GM10248 (cell line): ENCODE measurements at regions of chr9 and their contacts with region 1.

Region 1: DNA sequence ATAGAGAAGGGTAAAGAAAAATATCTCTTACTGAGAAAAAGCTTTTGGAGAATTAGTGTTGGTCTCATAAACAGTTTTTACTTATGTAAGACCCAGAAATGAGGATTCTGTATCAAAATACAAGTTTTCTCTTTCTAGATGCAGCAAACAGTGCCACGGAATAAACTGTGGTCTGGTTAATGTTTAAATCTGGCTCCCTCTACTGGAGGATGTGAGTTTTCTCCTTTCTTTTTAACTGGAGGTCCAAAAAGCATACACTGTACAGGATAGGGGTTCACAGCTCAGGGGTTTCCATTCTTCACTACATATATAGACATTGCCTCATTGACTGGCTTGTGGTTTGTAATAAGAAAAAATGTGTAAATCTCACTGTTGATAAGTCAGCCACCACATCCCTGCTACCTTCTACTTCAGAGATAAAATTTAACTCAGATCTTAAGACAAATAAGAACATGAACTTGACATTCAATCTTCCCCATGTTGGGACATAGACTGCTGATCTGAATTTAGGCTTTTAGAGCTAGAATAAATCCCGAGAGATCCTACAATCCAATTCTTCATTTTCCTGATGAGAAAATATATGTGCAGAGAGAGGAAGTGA is 98.9 kb downstream of the CFAP95 start:
- DNase-seq: peak; percentile 59
- CTCF ChIP-seq: peak; percentile 69

Region 2: GRCh38 chr9:69672596-69673310 is 246.8 kb before region 1 on chr9:
- CTCF ChIA-PET with region 1: interaction called, 10 read pairs
- POLR2A ChIA-PET with region 1: no interaction called
- DNase-seq: peak; percentile 81
- CTCF ChIP-seq: peak; percentile 92

Region 3: DNA sequence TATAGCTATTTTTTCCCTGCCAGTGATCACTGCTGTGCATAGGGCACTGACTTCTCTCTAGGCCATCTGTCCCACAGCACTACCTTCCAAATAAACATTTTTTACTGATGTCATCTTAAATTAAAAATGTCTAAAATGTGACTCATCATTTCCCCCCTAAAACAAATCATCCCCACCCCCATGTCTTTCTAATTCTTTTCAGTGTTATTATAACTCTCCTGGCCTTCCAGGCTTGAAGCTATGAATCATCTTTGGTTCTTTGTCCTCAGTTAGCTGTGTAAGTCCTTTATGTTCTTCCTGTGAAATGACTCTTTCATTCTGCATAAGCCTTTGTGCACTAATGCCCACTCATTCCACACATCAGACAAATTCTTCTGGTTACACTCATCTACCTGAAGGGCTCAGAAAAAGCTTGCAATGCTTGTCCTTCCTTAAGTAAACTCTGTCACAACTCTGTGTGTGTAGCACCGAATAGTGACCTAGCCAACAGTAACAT is 20.8 kb before region 1 on chr9:
- CTCF ChIA-PET with region 1: interaction called, 10 read pairs
- POLR2A ChIA-PET with region 1: no interaction called
- DNase-seq: no peak
- CTCF ChIP-seq: no peak

Region 4: DNA sequence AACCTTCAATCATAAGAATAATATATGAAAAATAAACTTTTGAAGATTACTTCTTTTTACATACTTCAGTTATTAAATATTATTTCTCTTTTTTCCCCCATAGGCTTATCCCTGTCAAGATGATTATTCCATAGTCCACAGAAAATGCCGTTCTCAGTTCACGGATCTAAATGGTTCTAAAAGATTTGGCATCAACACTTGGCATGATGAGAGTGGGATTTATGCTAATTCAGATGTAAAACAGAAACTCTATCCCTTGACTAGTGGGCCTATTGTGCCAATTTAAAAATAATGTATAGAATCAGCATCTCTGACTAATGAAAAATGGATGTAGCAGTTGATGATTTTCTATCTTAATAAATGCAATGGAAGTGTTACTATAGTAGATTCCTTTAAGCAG is 13.7 kb before region 1 on chr9:
- CTCF ChIA-PET with region 1: interaction called, 14 read pairs
- POLR2A ChIA-PET with region 1: no interaction called
- DNase-seq: no peak
- CTCF ChIP-seq: no peak

Region 5: DNA sequence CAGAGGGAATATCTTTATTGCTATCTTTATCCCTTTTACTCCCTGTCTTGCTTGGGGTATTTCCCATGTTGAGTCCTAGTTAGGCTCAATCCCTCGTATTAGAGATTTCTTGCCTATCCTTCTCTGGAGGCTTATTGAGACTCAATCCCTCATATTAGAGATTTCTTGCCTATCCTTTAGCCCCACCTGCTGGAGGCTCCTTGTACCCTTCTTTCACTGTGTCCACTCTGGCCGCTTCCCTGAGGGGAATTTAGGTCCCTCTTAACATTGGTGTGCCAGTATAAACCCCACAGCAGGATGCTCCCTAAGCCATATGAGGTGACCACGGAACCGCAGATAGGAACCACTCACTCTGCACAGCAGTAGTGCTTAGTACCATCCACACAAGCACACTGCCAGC is 13.3 kb after region 1 on chr9:
- CTCF ChIA-PET with region 1: interaction called, 12 read pairs
- POLR2A ChIA-PET with region 1: no interaction called
- DNase-seq: no peak
- CTCF ChIP-seq: no peak